Dorsolateral prefrontal cortex (tissue), 120 donors: ENCODE measurements at regions of chr13 and their contacts with region 1.

Region 1: GRCh38 chr13:42110410-42111155 is 62.1 kb downstream of the DGKH start:
- DNase-seq: peak in 1 of 10 donors; percentile 19
- H3K4me3 ChIP-seq: peak overlapping the region in 3 of 59 donors; percentile 1 to 21 (median 9)
- H3K27ac ChIP-seq: no peak overlapping the region
- H3K27me3 ChIP-seq: no peaks in the 10 kb centered on the region
- CTCF ChIP-seq: peak; percentile 73 to 99 (median 91)

Region 2: DNA sequence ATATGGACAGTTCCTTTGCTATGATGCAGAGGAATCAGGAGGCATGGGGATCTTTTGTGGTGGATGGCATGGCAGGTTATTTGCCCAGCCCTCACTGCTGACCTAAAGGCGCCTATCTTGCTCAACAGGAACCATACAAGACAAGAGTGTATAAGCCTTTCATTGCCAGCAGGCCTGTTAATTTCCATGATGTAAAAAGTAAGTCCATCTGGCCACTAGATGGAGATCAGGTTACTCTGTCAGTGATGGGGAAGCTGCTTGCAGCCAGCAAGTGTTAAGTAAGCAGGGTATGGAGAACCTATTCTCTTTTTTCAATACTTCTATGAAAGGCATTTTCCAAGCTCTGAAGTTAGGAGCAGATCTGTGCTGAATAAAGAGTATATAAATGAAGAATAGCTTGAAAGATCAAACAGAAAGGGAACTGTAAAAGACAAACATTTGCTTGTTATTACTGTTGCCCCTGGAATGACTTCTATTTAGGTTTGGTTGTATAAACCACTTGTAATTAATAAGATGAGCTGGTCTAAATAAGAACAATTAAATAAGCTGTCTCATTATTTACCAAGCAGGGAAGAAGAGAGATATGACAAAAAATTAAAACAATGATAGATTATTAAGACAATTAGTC is 442.3 kb before region 1 on chr13:
- intact Hi-C with region 1: loop called in 1 of 2 experiments (anchors 2 kb)
- DNase-seq: peak in 6 of 10 donors; percentile 14 to 67 (median 48)
- H3K4me3 ChIP-seq: no peak overlapping the region
- H3K27ac ChIP-seq: peak overlapping the region in 1 of 59 donors; percentile 3
- H3K27me3 ChIP-seq: no peaks in the 10 kb centered on the region
- CTCF ChIP-seq: peak; percentile 69 to 95 (median 86)

Region 3: DNA sequence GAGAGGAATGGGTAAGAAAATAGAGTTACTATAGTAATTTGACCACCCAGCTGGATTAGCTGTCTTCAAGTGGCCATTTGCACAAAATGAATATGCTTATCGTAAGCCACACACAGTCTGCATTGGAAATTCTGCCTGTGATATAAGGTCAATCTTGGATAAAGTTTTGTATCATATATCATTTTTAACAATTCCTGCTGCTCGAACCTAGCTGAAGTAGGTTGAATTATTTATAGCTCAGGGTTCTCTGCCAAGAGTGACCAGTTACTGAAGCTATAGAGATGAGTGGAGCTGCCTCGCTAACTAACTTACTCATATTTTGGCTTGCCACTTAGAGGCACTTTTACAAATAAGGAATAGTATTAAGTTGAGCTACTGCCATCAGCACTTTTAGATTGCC is 432.3 kb before region 1 on chr13:
- intact Hi-C with region 1: loop called in 1 of 2 experiments (anchors 5 kb)
- DNase-seq: no peak
- H3K4me3 ChIP-seq: no peak overlapping the region
- H3K27ac ChIP-seq: no peak overlapping the region
- H3K27me3 ChIP-seq: no peaks in the 10 kb centered on the region
- CTCF ChIP-seq: no peak

Region 4: GRCh38 chr13:42028113-42028799 is 82.3 kb before region 1 on chr13:
- intact Hi-C with region 1: no loop called
- DNase-seq: no peak
- H3K4me3 ChIP-seq: no peak overlapping the region
- H3K27ac ChIP-seq: no peak overlapping the region
- H3K27me3 ChIP-seq: peaks cover 0 to 3% (median 0%) of the 10 kb centered on the region in 45 donors
- CTCF ChIP-seq: no peak